ENCODE measurements at regions of chr17 and their contacts with region 1.

Region 1: GRCh38 chr17:10646392-10646990 is 10.6 kb downstream of the MYH3 start:
- DNase-seq: no peak
- H3K4me3 ChIP-seq: no peak overlapping the region
- H3K27me3 ChIP-seq: no peaks in the 10 kb centered on the region
- CTCF ChIP-seq: peak; percentile 88

Region 2: DNA sequence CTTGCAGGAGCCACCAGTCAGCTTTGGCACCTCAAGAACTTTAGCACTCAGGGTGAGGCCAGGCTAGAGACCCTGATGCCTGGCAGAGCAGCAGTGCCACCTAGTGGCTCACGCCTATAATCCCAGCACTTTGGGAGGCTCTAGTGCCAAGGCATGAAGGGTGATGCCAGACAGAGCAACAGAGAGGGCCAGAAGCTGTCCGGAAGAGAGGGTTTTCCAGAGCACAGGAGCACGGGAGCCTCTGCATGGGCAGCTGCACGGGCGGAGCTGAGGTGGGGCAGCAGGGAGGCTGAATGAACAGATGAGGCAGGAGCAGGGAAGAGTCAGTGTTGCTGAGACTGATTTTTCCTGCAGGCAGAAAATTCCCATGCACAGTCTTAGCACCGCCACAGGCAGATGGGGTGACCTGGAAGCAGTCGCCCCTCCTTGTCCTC is 28.3 kb before region 1 on chr17:
- CTCF ChIA-PET with region 1: interaction called, 12 read pairs
- POLR2A ChIA-PET with region 1: no interaction called
- DNase-seq: no peak
- H3K4me3 ChIP-seq: no peak overlapping the region
- H3K27me3 ChIP-seq: no peaks in the 10 kb centered on the region
- CTCF ChIP-seq: peak; percentile 95

Region 3: GRCh38 chr17:10657148-10657547 is 10.7 kb after region 1 on chr17 and contains the start of gene MYH3:
- CTCF ChIA-PET with region 1: interaction called, 22 read pairs
- POLR2A ChIA-PET with region 1: no interaction called
- DNase-seq: no peak
- H3K4me3 ChIP-seq: no peak within 1 kb of the TSS
- H3K27me3 ChIP-seq: no peaks in the 10 kb centered on the region
- CTCF ChIP-seq: no peak
- polyA plus RNA-seq, gene MYH3: 1.3 and 1.8 TPM in 2 replicates

Region 4: DNA sequence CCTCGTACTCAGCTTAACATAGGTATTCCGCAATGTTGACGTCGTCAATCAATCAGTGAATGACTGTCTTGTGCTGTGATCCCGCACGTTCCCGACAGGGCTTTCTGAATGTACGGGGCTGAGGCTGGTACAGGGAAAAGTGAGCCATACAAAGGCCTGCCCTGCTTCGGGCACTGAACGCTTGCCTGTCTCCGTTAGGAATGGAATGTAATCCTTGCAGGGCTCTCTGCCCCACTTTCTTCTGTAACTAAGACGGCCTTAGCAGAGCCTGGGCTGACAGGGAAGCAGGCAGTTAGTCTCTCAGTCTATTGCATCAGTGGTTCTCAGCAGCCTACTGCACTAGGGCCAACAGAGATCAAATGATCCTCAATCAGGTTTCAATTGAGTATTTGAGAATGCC is 26.8 kb after region 1 on chr17:
- CTCF ChIA-PET with region 1: interaction called, 14 read pairs
- POLR2A ChIA-PET with region 1: no interaction called
- DNase-seq: no peak
- H3K4me3 ChIP-seq: no peak overlapping the region
- H3K27me3 ChIP-seq: no peaks in the 10 kb centered on the region
- CTCF ChIP-seq: no peak

Region 5: DNA sequence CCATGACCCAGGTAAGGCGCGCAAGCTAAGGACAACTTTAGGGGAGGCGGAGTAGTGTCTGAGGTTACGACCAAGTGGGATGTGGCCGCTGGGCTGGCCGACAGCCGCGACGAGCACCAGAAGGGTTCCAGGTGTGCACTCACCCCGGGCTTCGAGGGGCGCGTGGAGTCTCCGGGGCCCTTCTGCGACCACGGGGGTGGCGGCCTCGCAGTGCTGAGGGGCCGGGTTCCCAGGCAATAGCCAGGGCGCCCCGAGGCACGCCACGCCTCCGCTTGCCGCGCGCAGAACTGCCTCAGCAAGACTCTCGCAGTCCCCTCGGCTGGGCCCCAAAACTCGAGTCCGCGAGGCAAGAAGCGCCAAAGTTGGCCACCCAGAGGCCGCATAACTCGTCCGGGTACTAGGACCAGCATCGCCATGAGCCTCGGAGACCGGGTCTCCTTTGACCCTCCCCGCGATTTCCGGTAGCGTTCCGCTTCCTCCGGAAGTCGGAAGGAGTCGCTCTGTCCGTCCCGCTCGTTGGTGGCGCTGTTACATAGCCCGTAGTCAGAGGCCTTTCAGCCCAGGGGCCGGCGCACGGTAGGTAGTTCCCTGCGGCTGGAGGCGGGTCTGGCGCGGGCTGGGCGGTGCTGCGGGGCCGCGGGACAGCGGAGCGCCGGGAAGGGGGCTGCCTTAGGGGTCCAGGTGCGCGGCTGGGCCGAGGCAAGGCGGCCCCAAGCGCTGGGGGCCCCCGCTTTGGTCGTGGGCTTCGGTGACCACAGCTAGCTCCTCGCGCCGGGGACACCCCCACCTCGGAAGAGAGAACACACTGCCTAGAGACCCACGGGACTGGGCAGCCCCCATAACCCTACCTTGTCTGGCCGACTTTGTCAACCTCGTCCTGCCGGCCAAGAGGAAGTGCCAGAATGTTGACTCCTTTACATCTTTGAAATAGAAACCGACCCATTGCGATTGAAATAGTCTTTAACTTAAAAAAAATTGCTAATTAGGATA is 50.9 kb after region 1 on chr17 and contains the starts of genes ADPRM and SCO1:
- CTCF ChIA-PET with region 1: interaction called, 18 read pairs
- POLR2A ChIA-PET with region 1: no interaction called
- DNase-seq: peak; percentile 60
- H3K4me3 ChIP-seq: peak within 1 kb of the TSS; percentile 97
- H3K27me3 ChIP-seq: no peaks in the 10 kb centered on the region
- CTCF ChIP-seq: peak; percentile 60
- polyA plus RNA-seq, gene ADPRM: 10.8 and 19.7 TPM in 2 replicates
- polyA plus RNA-seq, gene SCO1: 21.7 and 31.1 TPM in 2 replicates

Region 6: DNA sequence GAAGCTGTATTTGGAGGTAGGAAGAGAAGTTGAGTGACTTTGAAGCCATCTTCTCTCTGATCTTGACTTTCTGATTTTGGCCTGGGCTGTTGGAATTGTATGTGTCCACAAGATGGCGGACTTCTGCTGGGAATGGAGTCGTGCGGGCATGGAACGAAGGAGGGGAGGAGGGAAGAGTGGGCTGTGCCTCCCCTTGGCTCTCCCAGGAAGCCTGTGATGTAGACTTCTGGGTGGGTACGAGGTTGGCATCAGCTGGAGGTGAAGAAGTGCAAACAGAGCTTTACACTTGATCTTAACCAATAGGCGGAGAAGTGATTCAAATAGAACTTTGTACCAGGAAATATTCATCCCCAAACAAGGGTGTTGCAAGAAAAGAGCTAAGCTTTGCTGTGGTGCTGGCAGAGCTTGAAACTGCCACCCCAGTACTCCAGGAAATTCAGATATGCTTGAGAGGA is 90.7 kb after region 1 on chr17:
- CTCF ChIA-PET with region 1: interaction called, 44 read pairs
- POLR2A ChIA-PET with region 1: no interaction called
- DNase-seq: no peak
- H3K4me3 ChIP-seq: no peak overlapping the region
- H3K27me3 ChIP-seq: no peaks in the 10 kb centered on the region
- CTCF ChIP-seq: peak; percentile 86

Region 7: GRCh38 chr17:10844621-10845387 is 198.3 kb after region 1 on chr17:
- CTCF ChIA-PET with region 1: interaction called, 72 read pairs
- POLR2A ChIA-PET with region 1: no interaction called
- DNase-seq: no peak
- H3K4me3 ChIP-seq: peak overlapping the region; percentile 45
- H3K27me3 ChIP-seq: no peaks in the 10 kb centered on the region
- CTCF ChIP-seq: peak; percentile 89